ENCODE measurements at regions of chr5 and their contacts with region 1.

Region 1: DNA sequence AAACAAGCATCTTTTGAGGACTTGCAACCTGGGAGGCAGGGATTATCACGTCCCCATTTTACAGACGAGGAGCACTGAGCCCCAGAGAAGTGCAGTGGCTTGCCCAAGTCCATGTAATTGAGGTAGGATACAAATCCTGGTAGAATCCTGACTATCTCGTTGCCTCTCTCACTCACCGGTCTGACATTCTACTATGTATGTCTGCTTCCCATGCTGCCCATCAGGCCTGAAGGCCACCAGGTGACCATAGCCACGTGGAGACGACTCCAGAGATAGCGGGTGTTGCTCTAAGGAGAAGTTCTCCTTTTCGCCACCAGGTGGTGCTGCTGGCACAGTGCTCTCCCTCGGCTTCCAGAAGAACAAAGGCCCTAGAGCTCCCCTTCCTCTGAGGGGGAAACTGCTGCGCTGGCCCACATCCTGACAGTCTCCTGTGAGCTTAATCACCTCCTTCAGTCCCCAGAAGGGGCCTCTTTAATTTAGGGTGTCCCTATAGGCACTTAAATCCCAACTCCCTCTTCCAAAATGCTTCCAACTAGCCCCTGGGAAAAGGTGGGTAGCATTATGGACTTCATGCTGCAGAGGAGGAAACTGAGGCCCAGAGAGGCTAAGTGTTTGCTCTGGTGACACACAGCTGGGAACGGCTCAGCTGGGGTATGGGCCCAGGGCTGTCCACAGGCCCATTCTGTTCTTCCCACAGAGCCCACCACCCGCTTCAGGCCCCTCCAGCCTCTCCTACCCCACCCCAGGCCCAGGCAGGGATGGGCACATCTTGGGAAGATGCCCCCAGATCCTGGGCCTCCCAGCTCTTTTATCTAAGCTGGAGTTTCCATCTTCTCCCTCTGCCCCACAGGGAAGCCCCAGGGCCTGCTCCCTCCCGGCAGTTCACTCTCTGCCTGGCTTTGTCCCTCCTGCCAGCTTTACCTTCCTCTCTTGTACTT is 6.4 kb downstream of the SLC34A1 start:
- DNase-seq: peak; percentile 90
- H3K4me3 Mint-ChIP-seq: no peak overlapping the region
- H3K27ac Mint-ChIP-seq: peak overlapping the region; percentile 84
- H3K4me1 Mint-ChIP-seq: peaks cover 34% of the 10 kb centered on the region
- H3K27me3 Mint-ChIP-seq: peaks cover 7% of the 10 kb centered on the region

Region 2: GRCh38 chr5:176979669-176980068 is 411.0 kb before region 1 on chr5:
- CTCF ChIA-PET with region 1: no interaction called
- POLR2A ChIA-PET with region 1: no interaction called
- DNase-seq: no peak
- H3K4me3 Mint-ChIP-seq: no peak overlapping the region
- H3K27ac Mint-ChIP-seq: no peak overlapping the region
- H3K4me1 Mint-ChIP-seq: peaks cover 9% of the 10 kb centered on the region
- H3K27me3 Mint-ChIP-seq: no peaks in the 10 kb centered on the region

Region 3: DNA sequence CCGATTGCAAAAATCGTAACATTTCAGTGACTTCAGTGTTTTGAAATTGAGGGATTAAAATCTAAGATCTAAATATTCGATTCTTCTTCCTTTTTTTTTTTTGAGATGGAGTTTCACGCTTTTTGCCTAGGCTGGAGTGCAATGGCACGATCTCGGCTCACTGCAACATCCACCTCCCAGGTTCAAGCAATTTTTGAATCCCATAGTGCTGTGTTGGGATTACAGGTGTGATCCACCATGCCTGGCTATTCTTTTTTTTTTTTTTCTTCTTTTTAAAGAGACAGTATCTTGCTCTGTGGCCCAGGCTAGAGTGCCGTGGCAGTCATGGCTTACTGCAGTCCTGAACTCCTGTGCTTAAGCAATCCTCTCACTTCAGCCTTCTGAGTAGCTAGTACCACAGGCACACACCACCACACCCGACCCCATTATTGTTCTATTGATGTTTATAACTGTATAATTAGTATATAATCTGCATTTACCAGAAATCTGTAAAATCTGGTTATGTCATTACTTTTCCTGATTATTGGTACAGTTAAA is 214.4 kb before region 1 on chr5:
- CTCF ChIA-PET with region 1: no interaction called
- POLR2A ChIA-PET with region 1: no interaction called
- DNase-seq: no peak
- H3K4me3 Mint-ChIP-seq: no peak overlapping the region
- H3K27ac Mint-ChIP-seq: no peak overlapping the region
- H3K4me1 Mint-ChIP-seq: peaks cover 12% of the 10 kb centered on the region
- H3K27me3 Mint-ChIP-seq: no peaks in the 10 kb centered on the region

Region 4: DNA sequence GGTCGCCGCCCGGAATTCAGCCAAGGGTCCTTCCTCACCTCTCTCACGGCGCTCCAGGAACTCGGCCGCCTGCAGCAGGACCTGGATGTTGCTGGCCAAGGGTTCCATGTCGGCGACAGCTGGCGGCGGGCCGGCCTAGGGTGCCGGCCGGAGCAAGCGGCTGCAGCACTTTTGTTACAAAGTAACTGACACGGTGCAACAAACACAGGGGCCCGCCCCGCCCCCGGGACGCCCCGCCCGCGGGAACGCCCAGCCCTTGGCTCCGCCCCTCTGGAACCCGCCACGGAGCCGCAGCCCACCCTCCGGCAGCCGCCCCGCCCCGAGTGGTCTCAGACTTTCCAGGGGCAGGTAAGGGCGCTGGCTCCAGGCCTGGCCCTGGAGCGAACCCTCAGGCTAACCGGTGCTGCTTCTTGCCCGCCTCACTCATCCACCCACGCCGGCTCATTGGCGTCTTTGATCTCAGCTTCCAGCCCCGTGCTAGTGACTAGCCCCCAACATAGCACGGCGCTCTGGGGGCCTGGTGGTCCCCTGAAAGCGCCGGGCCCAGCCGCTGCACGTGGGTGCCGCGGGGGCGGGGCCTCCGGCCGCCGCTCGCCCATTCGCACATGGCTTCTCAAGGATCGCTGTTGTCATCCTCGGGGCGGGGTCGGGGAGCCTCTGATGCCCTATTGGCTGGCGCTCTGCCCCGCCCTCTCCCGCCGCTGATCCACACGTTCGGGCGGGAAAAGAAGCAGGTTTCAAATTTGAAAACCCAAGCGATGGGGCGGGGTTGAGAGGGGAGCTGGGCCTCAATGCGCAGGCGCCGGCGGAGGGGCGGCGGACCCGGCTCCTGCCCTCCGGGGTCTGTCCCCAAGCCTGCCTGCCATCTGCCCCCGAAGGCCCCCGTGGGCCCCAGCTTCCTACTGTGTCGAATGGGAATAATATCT is 78.6 kb before region 1 on chr5 and contains the start of gene MXD3:
- CTCF ChIA-PET with region 1: interaction called, 17 read pairs
- POLR2A ChIA-PET with region 1: no interaction called
- DNase-seq: peak; percentile 99
- H3K4me3 Mint-ChIP-seq: peak within 1 kb of the TSS; percentile 97
- H3K27ac Mint-ChIP-seq: peak within 1 kb of the TSS; percentile 96
- H3K4me1 Mint-ChIP-seq: peaks cover 55% of the 10 kb centered on the region
- H3K27me3 Mint-ChIP-seq: no peaks in the 10 kb centered on the region
- total RNA-seq, gene MXD3: 107 to 109 TPM

Region 5: DNA sequence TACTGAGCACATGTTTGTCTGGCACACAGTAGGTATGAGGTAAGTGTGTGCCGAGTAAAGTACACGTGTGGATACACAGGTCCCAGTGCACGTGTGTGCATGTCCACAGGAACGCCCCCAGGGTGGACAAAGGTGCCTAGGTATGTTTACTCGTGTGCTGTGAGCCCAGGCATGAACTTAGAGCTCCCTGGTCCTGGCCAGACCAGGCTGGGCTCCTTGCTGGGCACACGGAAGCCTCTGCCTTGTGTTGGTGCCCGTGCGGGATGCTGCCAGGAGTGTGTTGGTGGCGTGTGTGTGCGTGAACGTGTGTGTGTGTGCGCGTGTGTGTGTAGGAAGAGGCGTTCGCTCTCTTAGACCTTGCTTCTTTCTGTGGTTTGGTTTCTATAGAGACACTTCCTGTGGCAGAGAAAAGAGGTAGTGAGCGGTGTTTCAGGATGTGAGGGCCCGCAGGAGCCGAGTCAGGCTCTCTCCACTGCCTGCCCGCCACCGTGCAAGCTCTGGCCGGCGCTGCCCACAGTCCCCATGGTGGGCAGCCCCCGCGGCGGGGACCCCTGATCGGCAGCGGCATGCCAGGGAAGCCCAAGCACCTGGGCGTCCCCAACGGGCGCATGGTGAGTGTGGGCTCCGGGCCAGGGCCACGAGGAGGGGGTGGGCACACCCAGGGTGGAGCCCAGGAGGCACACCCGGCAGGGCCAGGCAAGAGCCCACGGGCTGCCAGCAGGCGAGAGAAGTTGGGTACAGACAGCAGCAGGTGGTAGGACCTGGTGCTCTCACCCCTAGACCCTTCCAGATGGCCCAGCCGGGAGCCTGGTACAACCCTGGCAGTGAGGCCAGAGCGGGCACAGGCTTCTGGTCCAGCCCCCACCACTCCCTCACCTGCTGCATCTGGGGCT is 32.9 kb before region 1 on chr5 and contains the start of gene RGS14:
- CTCF ChIA-PET with region 1: interaction called, 26 read pairs
- POLR2A ChIA-PET with region 1: no interaction called
- DNase-seq: peak; percentile 83
- H3K4me3 Mint-ChIP-seq: peak within 1 kb of the TSS; percentile 91
- H3K27ac Mint-ChIP-seq: peak within 1 kb of the TSS; percentile 85
- H3K4me1 Mint-ChIP-seq: peaks cover 81% of the 10 kb centered on the region
- H3K27me3 Mint-ChIP-seq: no peaks in the 10 kb centered on the region
- total RNA-seq, gene RGS14: 124 to 132 TPM

Region 6: GRCh38 chr5:177370488-177371119 is 20.0 kb before region 1 on chr5:
- CTCF ChIA-PET with region 1: interaction called, 97 read pairs
- POLR2A ChIA-PET with region 1: no interaction called
- DNase-seq: peak; percentile 56
- H3K4me3 Mint-ChIP-seq: peak overlapping the region; percentile 36
- H3K27ac Mint-ChIP-seq: peak overlapping the region; percentile 36
- H3K4me1 Mint-ChIP-seq: peaks cover 66% of the 10 kb centered on the region
- H3K27me3 Mint-ChIP-seq: no peaks in the 10 kb centered on the region

Region 7: DNA sequence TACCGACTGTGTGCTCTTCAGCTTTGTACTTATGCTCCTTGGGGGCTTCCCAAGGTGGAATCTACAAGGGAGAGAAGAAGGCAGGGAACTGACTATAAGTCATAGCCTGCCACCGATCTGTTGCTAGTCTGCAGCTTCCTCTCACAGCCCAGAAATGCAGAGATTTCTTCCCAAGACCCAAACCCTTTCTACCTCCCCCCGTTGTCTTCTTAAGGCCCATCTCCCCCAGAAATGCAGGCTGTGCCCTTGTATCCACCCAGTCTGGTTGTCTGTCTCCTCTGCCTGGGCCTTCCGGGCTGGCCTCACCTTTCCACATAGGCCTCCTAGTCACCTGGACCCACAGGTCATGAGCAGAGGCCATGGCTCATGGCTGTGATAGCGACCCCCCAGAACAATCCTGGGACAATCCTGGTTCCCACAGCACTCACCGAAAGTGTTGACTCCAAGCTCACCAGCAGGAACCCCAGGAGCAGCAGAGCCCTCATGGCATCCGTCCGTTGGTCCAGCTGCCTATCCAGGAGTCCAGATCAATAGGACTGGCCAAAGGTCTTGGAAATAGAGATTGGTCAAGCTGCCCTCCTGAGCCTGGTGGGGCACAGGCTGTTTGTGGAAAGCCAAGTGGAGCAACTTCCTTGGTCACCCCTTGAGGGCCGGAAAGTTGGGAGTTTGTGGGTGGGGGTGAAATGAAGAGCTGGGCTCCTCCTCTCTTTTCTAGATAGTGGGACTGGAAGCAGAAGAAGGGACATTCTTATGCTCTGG is 18.6 kb after region 1 on chr5 and contains the start of gene F12:
- CTCF ChIA-PET with region 1: interaction called, 156 read pairs
- POLR2A ChIA-PET with region 1: no interaction called
- DNase-seq: no peak
- H3K4me3 Mint-ChIP-seq: no peak within 1 kb of the TSS
- H3K27ac Mint-ChIP-seq: no peak within 1 kb of the TSS
- H3K4me1 Mint-ChIP-seq: peaks cover 48% of the 10 kb centered on the region
- H3K27me3 Mint-ChIP-seq: peaks cover 6% of the 10 kb centered on the region
- total RNA-seq, gene F12: 0.22 to 0.60 TPM

Region 8: GRCh38 chr5:177431317-177432142 is 40.9 kb after region 1 on chr5:
- CTCF ChIA-PET with region 1: interaction called, 1,643 read pairs
- POLR2A ChIA-PET with region 1: no interaction called
- DNase-seq: peak; percentile 79
- H3K4me3 Mint-ChIP-seq: peak overlapping the region; percentile 96
- H3K27ac Mint-ChIP-seq: peak overlapping the region; percentile 92
- H3K4me1 Mint-ChIP-seq: peaks cover 67% of the 10 kb centered on the region
- H3K27me3 Mint-ChIP-seq: no peaks in the 10 kb centered on the region

Region 9: DNA sequence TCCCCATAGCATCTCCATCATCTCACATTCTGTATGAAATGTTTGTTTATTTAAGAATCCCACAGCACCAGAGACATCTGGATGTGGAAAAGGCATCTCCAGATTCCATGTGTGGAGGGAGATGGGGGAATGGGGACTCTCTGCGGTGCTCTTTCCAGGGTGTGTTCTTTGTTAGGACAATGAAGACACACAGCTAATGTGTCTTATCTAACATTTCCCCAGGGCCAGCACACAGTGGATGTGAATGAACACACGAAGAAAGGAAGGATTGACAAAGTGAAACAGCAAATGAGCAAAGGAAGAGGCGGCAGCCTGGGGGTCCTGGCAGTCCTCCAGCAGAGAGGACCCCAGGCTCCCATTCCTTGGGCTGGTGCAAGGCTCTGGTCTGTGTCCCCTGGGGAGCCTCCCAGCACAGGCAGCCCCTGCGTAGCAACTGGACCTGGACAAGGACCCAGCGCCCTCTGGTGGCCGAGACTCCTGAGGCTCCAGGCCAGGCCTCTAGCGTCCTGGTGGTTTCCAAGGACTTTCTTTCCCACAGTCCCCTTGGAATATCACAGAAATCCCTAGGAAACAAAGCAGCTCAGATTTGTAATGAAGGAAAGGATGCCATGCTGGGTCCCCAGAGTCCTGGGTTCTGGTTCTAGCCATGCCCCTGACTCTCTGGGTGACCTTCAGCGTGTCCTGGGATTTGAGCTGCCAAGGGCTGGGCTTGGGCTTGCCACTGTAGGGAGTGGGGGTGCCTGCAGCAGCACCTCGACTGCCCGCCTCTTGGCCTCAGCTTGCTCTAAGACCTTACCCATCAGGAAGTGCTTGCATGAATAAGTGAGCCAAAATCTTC is 110.3 kb after region 1 on chr5:
- CTCF ChIA-PET with region 1: interaction called, 36 read pairs
- POLR2A ChIA-PET with region 1: interaction called, 3 read pairs
- DNase-seq: peak; percentile 83
- H3K4me3 Mint-ChIP-seq: no peak overlapping the region
- H3K27ac Mint-ChIP-seq: no peak overlapping the region
- H3K4me1 Mint-ChIP-seq: peaks cover 22% of the 10 kb centered on the region
- H3K27me3 Mint-ChIP-seq: peaks cover 18% of the 10 kb centered on the region

Measured in activated CD4-positive, alpha-beta T cell treated with anti-CD3 and anti-CD28 coated beads, Interleukin-2, amount 10 ng/mL, durations not matched to agents 7 days and 5 days (primary cell).